PC-3 (cell line): ENCODE measurements at regions of chr12 and their contacts with region 1.

Region 1: DNA sequence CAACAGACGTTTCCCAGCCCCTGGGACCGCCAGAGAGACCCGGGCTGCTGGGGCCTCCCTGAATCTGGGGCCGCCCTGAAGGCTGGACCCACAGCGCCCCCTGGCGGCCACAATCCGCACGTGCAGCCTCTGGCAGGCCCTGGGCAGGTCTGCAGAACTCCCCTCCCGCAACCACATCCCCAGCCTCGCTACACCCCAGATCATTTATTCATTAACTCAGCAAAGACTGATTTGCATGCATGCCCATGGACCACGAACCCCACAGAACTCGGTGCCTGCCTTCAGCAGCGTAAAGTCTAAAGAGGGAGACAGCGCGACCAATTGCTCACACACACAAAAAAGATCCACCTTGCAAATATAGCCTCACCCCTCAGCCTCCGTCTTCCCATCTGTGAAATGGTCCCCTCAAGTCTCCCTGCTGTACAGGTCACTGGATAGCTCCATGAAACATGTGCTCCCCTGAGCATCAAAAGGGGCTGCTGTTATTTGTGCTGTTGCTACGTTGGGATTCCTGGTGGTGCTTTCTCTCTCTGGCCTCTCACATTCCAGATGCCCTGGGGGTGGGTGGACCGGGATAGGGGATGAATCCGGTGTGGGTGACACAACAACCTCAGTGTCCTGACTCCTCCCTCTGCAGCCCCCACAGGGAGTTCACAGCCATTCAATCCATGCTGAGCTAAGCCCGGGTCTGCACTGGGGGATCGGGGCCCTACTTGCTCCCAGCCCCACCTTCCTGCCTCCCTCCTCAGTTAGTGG is 96.4 kb downstream of the SCARB1 start:
- DNase-seq: peak; percentile 78
- ATAC-seq: peak; percentile 78
- H3K4me3 ChIP-seq: no peak overlapping the region
- H3K27ac ChIP-seq: no peak overlapping the region
- H3K4me1 ChIP-seq: peaks cover 16% of the 10 kb centered on the region
- H3K27me3 ChIP-seq: no peaks in the 10 kb centered on the region
- CTCF ChIP-seq: peak; percentile 99

Region 2: GRCh38 chr12:124422570-124423523 is 344.4 kb before region 1 on chr12:
- CTCF ChIA-PET with region 1: interaction called, 3 read pairs
- POLR2A ChIA-PET with region 1: no interaction called
- intact Hi-C with region 1: loop called (anchors 1 kb)
- DNase-seq: peak; percentile 91
- ATAC-seq: peak; percentile 84
- H3K4me3 ChIP-seq: peak overlapping the region; percentile 66
- H3K27ac ChIP-seq: peak overlapping the region; percentile 97
- H3K4me1 ChIP-seq: peaks cover 31% of the 10 kb centered on the region
- H3K27me3 ChIP-seq: no peaks in the 10 kb centered on the region
- CTCF ChIP-seq: no peak

Region 3: GRCh38 chr12:124745891-124746570 is 21.2 kb before region 1 on chr12:
- CTCF ChIA-PET with region 1: interaction called, 8 read pairs
- POLR2A ChIA-PET with region 1: no interaction called
- intact Hi-C with region 1: loop called (anchors 2 kb)
- DNase-seq: peak; percentile 94
- ATAC-seq: peak; percentile 81
- H3K4me3 ChIP-seq: peak overlapping the region; percentile 35; the same call in 1 of the 2 replicates
- H3K27ac ChIP-seq: peak overlapping the region; percentile 79
- H3K4me1 ChIP-seq: peaks cover 36% of the 10 kb centered on the region
- H3K27me3 ChIP-seq: no peaks in the 10 kb centered on the region
- CTCF ChIP-seq: no peak

Region 4: GRCh38 chr12:125140279-125141209 is 373.3 kb after region 1 on chr12:
- CTCF ChIA-PET with region 1: no interaction called
- POLR2A ChIA-PET with region 1: no interaction called
- intact Hi-C with region 1: no loop called
- DNase-seq: peak; percentile 90
- ATAC-seq: peak; percentile 88
- H3K4me3 ChIP-seq: no peak overlapping the region
- H3K27ac ChIP-seq: peak overlapping the region; percentile 58
- H3K4me1 ChIP-seq: peaks cover 34% of the 10 kb centered on the region
- H3K27me3 ChIP-seq: no peaks in the 10 kb centered on the region
- CTCF ChIP-seq: no peak